IMR-90 (cell line): ENCODE measurements at regions of chr21 and their contacts with region 1.

Region 1: GRCh38 chr21:26842976-26843932 is 2.0 kb downstream of the ADAMTS1 start:
- DNase-seq: peak; percentile 96
- ATAC-seq: peak; percentile 7
- H3K4me3 ChIP-seq: peak overlapping the region; percentile 97
- H3K27ac ChIP-seq: peak overlapping the region; percentile 89
- H3K4me1 ChIP-seq: peaks cover 6% of the 10 kb centered on the region
- H3K27me3 ChIP-seq: no peaks in the 10 kb centered on the region
- CTCF ChIP-seq: no peak
- POLR2A ChIP-seq: peak; percentile 50; the same call in 1 of the 2 replicates
- RAD21 ChIP-seq: 0 out of 2 replicates have a peak, but pooled peaks have one; percentile 11

Region 2: GRCh38 chr21:26769613-26770188 is 73.6 kb before region 1 on chr21:
- CTCF ChIA-PET with region 1: no interaction called
- POLR2A ChIA-PET with region 1: no interaction called
- dilution Hi-C with region 1: no loop called
- in situ Hi-C with region 1: loop called (anchors 5 kb)
- intact Hi-C with region 1: no loop called
- DNase-seq: peak; percentile 73
- ATAC-seq: peak; percentile 75
- H3K4me3 ChIP-seq: no peak overlapping the region
- H3K27ac ChIP-seq: no peak overlapping the region
- H3K4me1 ChIP-seq: no peaks in the 10 kb centered on the region
- H3K27me3 ChIP-seq: no peaks in the 10 kb centered on the region
- CTCF ChIP-seq: peak; percentile 72
- POLR2A ChIP-seq: no peak
- RAD21 ChIP-seq: peak; percentile 66

Region 3: GRCh38 chr21:26945916-26946675 is 102.8 kb after region 1 on chr21:
- CTCF ChIA-PET with region 1: no interaction called
- POLR2A ChIA-PET with region 1: no interaction called
- dilution Hi-C with region 1: no loop called
- in situ Hi-C with region 1: no loop called
- intact Hi-C with region 1: no loop called
- DNase-seq: no peak
- ATAC-seq: no peak
- H3K4me3 ChIP-seq: no peak overlapping the region
- H3K27ac ChIP-seq: no peak overlapping the region
- H3K4me1 ChIP-seq: peaks cover 3% of the 10 kb centered on the region
- H3K27me3 ChIP-seq: no peaks in the 10 kb centered on the region
- CTCF ChIP-seq: no peak
- POLR2A ChIP-seq: no peak
- RAD21 ChIP-seq: no peak

Region 4: GRCh38 chr21:27831816-27832569 is 988.7 kb after region 1 on chr21:
- CTCF ChIA-PET with region 1: no interaction called
- POLR2A ChIA-PET with region 1: no interaction called
- dilution Hi-C with region 1: no loop called
- in situ Hi-C with region 1: no loop called
- intact Hi-C with region 1: loop called (anchors 5 kb)
- DNase-seq: peak; percentile 57
- ATAC-seq: peak; percentile 90
- H3K4me3 ChIP-seq: no peak overlapping the region
- H3K27ac ChIP-seq: peak overlapping the region; percentile 94; the same call in 1 of the 2 replicates
- H3K4me1 ChIP-seq: peaks cover 9% of the 10 kb centered on the region
- H3K27me3 ChIP-seq: no peaks in the 10 kb centered on the region
- CTCF ChIP-seq: no peak
- POLR2A ChIP-seq: no peak
- RAD21 ChIP-seq: no peak

Region 5: GRCh38 chr21:28229814-28230213 is 1386.6 kb after region 1 on chr21:
- CTCF ChIA-PET with region 1: no interaction called
- POLR2A ChIA-PET with region 1: interaction called, 3 read pairs
- dilution Hi-C with region 1: no loop called
- in situ Hi-C with region 1: no loop called
- intact Hi-C with region 1: loop called (anchors 5 kb)
- DNase-seq: peak; percentile 93
- ATAC-seq: peak; percentile 64
- H3K4me3 ChIP-seq: no peak overlapping the region
- H3K27ac ChIP-seq: peak overlapping the region; percentile 91; the same call in 1 of the 2 replicates
- H3K4me1 ChIP-seq: peaks cover 12% of the 10 kb centered on the region
- H3K27me3 ChIP-seq: no peaks in the 10 kb centered on the region
- CTCF ChIP-seq: no peak
- POLR2A ChIP-seq: no peak
- RAD21 ChIP-seq: no peak

Region 6: GRCh38 chr21:28442624-28443023 is 1599.4 kb after region 1 on chr21:
- CTCF ChIA-PET with region 1: no interaction called
- POLR2A ChIA-PET with region 1: no interaction called
- dilution Hi-C with region 1: no loop called
- in situ Hi-C with region 1: no loop called
- intact Hi-C with region 1: loop called (anchors 5 kb)
- DNase-seq: peak; percentile 86
- ATAC-seq: peak; percentile 49; the same call in 1 of the 2 replicates
- H3K4me3 ChIP-seq: no peak overlapping the region
- H3K27ac ChIP-seq: no peak overlapping the region
- H3K4me1 ChIP-seq: peaks cover 12% of the 10 kb centered on the region; the same call in 1 of the 2 replicates
- H3K27me3 ChIP-seq: no peaks in the 10 kb centered on the region
- CTCF ChIP-seq: no peak
- POLR2A ChIP-seq: no peak
- RAD21 ChIP-seq: no peak

Region 7: DNA sequence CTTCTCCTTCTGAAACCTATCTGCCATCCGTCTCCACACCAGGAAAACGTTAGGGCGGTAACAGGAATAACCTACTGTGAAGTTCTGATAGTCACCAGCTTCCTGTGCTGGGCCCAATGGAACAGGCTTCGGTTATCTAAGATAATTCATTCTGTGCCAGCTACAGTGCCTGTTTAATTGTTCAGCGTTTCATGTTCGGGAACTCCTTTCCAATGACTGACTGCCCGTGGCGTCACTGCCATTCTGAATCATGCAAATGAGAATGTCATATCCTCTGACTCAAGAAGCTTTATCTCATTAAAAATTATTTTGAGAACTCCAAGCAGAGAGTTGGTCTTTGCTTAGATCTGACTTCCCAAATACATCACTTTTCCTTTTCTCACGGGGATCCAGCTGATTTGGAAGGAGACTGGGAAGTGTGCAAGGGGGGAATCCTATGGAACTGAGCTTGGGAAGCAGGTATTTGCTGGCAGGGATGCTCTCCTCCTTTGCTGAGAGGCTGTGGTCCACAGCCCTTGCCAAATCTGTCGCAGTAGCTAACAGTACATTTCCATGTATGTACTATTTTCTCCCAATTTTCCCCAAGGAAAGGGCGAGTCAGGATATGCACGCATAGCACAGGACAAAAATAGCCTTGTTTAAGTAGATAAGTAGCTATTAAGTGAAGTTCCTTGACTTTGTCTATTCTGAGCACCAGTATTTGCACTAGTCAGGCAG is 1790.7 kb after region 1 on chr21:
- CTCF ChIA-PET with region 1: no interaction called
- POLR2A ChIA-PET with region 1: interaction called, 3 read pairs
- dilution Hi-C with region 1: no loop called
- in situ Hi-C with region 1: no loop called
- intact Hi-C with region 1: loop called (anchors 10 kb)
- DNase-seq: peak; percentile 95
- ATAC-seq: peak; percentile 23
- H3K4me3 ChIP-seq: no peak overlapping the region; the same call in 1 of the 2 replicates
- H3K27ac ChIP-seq: peak overlapping the region; percentile 75
- H3K4me1 ChIP-seq: peaks cover 21% of the 10 kb centered on the region
- H3K27me3 ChIP-seq: no peaks in the 10 kb centered on the region
- CTCF ChIP-seq: no peak
- POLR2A ChIP-seq: no peak
- RAD21 ChIP-seq: 0 out of 2 replicates have a peak, but pooled peaks have one; percentile 6

Region 8: GRCh38 chr21:28793043-28793442 is 1949.8 kb after region 1 on chr21:
- CTCF ChIA-PET with region 1: no interaction called
- POLR2A ChIA-PET with region 1: no interaction called
- dilution Hi-C with region 1: no loop called
- in situ Hi-C with region 1: loop called (anchors 10 kb)
- intact Hi-C with region 1: no loop called
- DNase-seq: peak; percentile 73
- ATAC-seq: peak; percentile 85
- H3K4me3 ChIP-seq: no peak overlapping the region
- H3K27ac ChIP-seq: no peak overlapping the region
- H3K4me1 ChIP-seq: peaks cover 9% of the 10 kb centered on the region
- H3K27me3 ChIP-seq: no peaks in the 10 kb centered on the region
- CTCF ChIP-seq: peak; percentile 75
- POLR2A ChIP-seq: no peak
- RAD21 ChIP-seq: peak; percentile 85